CD8-positive, alpha-beta T cell (primary cell): ENCODE measurements at regions of chr1 and their contacts with region 1.

Region 1: DNA sequence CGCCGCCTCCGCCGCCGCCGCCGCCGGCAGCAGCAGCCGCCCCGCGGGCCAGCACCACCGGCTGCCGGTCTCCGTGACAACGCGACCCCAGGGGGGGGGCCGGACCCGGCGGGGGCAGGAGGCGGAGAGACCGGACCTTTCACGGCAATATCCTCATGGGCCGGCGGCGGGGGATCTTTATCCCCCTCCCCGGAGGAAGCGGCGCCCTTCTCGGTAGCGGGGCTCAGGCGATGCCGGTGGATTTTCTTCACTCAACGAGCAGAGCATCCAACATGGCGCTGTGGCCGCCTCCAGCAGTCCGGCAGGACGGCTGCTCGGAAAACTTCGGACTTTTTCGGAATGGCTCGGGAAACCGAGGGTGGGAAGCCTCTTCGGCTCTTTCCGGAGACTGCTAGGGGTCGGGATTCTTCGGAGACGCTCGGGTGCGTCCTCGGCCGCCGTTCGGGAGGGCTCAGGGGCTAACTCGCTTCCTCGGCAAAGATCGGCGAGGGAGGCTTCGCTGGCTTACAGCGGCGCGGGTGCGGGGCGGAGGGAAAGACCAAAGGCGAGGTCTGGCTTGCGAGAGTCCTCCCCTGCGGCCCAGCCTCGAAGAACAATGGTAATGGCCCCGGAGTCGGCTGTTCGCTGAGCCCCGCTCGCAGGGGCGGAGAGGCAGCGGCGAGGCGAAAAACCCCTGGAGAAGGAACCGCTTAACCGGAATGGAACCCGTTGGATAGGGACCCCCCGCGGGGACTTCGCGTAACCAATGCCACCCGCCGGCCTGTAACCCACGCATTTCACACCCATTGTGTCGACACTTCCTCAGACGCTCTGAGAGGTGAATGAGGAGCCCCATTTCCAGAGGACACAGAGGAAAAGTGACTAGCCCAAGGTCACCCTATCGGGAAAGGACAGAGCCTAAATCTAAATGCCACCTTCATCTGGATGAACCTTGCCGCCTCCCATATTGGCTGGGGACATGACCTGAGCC is at the start of gene EIF4G3:
- DNase-seq: peak; percentile 97 to 100 (median 99)
- ATAC-seq: peak; percentile 95
- H3K4me3 ChIP-seq: peak within 1 kb of the TSS; percentile 77 to 86
- H3K4me3 Mint-ChIP-seq: peak within 1 kb of the TSS; percentile 92
- H3K27ac ChIP-seq: peak within 1 kb of the TSS; percentile 78 to 88
- H3K27ac Mint-ChIP-seq: peak within 1 kb of the TSS; percentile 91
- H3K4me1 ChIP-seq: peaks cover 18% of the 10 kb centered on the region
- H3K4me1 Mint-ChIP-seq: peaks cover 24% of the 10 kb centered on the region
- H3K27me3 ChIP-seq: no peaks in the 10 kb centered on the region
- H3K27me3 Mint-ChIP-seq: no peaks in the 10 kb centered on the region
- CTCF ChIP-seq: no peak
- total RNA-seq, gene EIF4G3: 19.6 to 19.8 TPM

Region 2: GRCh38 chr1:21042929-21043605 is 133.8 kb before region 1 on chr1:
- CTCF ChIA-PET with region 1: no interaction called
- POLR2A ChIA-PET with region 1: no interaction called
- intact Hi-C with region 1: no loop called
- DNase-seq: no peak
- ATAC-seq: no peak
- H3K4me3 ChIP-seq: no peak overlapping the region
- H3K4me3 Mint-ChIP-seq: no peak overlapping the region
- H3K27ac ChIP-seq: no peak overlapping the region
- H3K27ac Mint-ChIP-seq: no peak overlapping the region
- H3K4me1 ChIP-seq: no peaks in the 10 kb centered on the region
- H3K4me1 Mint-ChIP-seq: peaks cover 4% of the 10 kb centered on the region
- H3K27me3 ChIP-seq: no peaks in the 10 kb centered on the region
- H3K27me3 Mint-ChIP-seq: no peaks in the 10 kb centered on the region
- CTCF ChIP-seq: no peak

Region 3: DNA sequence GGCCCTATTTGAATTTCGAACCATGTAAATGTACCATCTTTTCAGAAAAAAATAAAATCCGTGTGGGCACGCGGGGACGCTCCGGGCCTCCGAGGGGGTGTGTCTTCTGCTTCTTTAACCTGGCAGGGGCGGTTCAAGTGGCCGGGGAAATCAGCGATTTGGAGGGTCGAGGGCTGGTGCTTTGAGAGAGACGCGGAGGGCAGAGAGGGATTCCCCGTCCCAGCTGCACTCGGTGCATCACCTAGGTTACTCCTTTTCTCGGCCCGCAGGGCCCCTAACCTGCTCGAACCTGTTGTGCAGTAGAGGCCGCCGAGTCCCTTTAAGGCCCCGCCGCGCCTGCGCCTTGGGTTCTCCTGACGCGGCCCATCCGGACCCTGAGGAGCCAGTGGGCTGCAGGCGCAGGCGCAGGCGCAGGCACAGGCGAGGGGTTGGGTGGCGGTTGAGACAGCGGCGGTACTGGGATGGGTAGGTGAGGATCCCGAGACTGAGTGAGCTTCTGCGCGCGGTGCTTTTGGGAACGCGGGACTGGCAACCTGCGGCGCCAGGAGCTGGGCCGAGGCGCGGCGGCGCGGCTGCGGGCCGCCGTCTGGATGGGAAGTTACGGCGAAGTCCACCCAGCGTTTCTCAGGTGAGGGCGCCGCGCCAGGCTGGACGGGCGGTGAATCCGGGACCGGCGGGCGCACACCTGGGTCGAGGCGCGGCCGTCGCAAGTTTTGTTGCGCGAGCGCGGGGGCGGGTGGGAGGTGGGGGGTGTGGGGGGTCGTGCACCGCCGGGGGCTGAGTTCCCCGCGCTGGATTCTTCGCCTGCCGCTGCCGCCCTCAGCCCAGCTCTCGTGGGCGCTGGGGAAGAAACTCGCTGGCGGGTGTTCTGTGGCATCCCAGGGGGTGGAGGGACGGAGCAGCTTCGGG is 263.1 kb after region 1 on chr1 and contains the start of gene NBPF3:
- CTCF ChIA-PET with region 1: no interaction called
- POLR2A ChIA-PET with region 1: no interaction called
- intact Hi-C with region 1: loop called in 1 of 2 experiments (anchors 2 kb)
- DNase-seq: peak; percentile 67 to 91 (median 86)
- ATAC-seq: peak; percentile 98
- H3K4me3 ChIP-seq: peak within 1 kb of the TSS; percentile 66 to 85
- H3K4me3 Mint-ChIP-seq: peak within 1 kb of the TSS; percentile 95
- H3K27ac ChIP-seq: peak within 1 kb of the TSS in 1 of 2 experiments; percentile 64
- H3K27ac Mint-ChIP-seq: peak within 1 kb of the TSS; percentile 95
- H3K4me1 ChIP-seq: peaks cover 9% of the 10 kb centered on the region
- H3K4me1 Mint-ChIP-seq: peaks cover 21% of the 10 kb centered on the region
- H3K27me3 ChIP-seq: no peaks in the 10 kb centered on the region
- H3K27me3 Mint-ChIP-seq: peaks cover 5% of the 10 kb centered on the region
- CTCF ChIP-seq: no peak
- total RNA-seq, gene NBPF3: 8.0 to 8.3 TPM